ENCODE measurements at regions of chr9 and their contacts with region 1.

Region 1: DNA sequence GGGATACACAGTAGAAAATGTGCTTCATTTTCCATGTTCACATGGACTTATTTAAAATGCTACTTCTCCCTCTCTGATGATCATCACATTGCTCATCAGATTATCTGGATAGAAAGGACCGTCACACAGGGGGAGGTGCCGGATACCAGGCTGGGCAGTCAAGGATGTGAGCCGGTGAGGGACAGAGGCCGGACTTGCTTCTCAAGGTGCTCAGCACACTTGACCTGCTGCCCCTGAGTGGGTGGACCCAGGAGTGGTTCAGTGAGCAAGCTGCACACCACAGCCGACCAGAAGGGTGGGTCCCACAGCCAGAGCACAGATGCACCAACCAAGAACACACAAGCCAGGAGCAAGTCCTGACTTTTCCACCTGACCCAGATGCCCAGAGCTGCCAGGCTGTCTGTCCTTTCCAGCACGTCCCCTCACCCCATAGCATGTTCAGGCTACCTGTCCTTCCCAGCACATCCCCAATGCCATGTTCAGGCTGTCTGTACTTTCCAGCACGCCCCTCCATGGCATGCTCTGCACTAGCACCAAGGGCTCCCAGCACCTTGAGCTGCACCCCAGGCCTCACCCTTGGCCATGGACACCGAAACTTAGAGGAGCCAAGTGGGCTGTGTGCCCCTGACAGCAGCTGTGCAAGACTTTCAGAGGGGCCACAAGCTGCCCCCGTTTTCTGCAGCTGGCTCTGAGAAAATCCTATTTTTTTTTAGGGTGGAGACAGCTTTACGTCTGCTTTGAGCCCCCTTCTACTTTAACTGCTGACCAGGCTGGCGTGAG is 77.8 kb downstream of the SECISBP2 start:
- DNase-seq: no peak
- H3K4me3 ChIP-seq: no peak overlapping the region
- H3K27ac ChIP-seq: no peak overlapping the region
- H3K4me1 ChIP-seq: no peaks in the 10 kb centered on the region
- H3K27me3 ChIP-seq: no peaks in the 10 kb centered on the region
- CTCF ChIP-seq: no peak

Region 2: GRCh38 chr9:89576404-89576839 is 180.3 kb after region 1 on chr9:
- CTCF ChIA-PET with region 1: interaction called, 10 read pairs
- POLR2A ChIA-PET with region 1: no interaction called
- intact Hi-C with region 1: no loop called
- DNase-seq: peak; percentile 38
- H3K4me3 ChIP-seq: no peak overlapping the region
- H3K27ac ChIP-seq: no peak overlapping the region
- H3K4me1 ChIP-seq: no peaks in the 10 kb centered on the region
- H3K27me3 ChIP-seq: peaks cover 22% of the 10 kb centered on the region
- CTCF ChIP-seq: peak; percentile 77

Measured in A673 (cell line).